Activated CD8-positive, alpha-beta T cell treated with anti-CD3 and anti-CD28 coated beads, Interleukin-2, amount 10 ng/mL, durations not matched to agents 7 days and 5 days (primary cell): ENCODE measurements at regions of chr19 and their contacts with region 1.

Region 1: DNA sequence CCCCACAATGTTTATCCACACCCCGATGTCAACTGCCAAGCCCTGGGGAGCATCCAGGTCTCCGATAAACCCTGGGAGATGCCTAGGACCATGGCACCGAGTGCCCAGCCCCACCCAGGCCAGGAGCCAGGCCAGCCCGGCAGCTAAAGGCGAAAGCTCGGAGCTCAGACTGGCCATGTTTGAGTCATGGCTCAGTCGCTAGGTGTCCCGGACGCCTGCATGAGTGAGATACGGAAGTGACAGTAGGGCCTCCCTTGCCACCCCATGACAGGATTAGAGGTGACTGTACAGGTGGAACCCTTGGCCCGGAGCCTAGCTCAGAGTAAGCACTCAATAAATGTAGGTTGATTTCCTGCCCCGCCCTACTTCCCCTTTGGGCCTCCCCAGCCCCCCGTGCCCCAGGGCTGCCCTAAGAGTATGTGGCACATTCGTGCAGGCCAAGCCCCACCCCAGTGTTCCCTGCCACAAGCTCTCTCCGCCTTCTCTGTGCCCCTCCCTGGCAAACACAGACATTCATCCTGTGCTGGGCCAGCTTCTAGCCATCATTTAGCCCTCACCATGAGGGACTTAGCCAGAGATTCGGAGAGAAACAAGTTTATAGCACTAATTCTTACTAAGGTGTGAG is 5.8 kb upstream of the TPM4 start:
- DNase-seq: peak; percentile 92
- ATAC-seq: peak; percentile 95
- H3K4me3 Mint-ChIP-seq: no peak overlapping the region
- H3K27ac Mint-ChIP-seq: no peak overlapping the region
- H3K4me1 Mint-ChIP-seq: peaks cover 51% of the 10 kb centered on the region
- H3K27me3 Mint-ChIP-seq: no peaks in the 10 kb centered on the region

Region 2: DNA sequence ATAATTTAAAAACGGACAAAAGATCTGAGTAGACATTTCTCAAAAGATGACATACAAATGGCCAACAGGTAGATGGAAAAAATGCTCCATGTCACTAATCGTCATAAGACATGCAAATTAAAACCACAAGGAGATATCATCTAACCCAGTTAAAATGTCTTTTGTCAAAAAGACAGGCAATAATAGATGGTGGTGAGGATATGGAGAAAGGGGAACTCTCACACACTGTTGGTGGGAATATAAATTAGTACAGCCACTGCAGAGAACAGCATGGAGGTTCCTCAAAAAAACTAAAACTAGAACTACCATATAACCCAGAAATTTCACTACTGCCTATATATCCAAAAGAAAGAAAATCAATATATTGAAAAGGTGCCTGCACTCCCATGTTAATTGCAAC is 83.8 kb before region 1 on chr19:
- CTCF ChIA-PET with region 1: no interaction called
- POLR2A ChIA-PET with region 1: no interaction called
- DNase-seq: no peak
- ATAC-seq: no peak
- H3K4me3 Mint-ChIP-seq: no peak overlapping the region
- H3K27ac Mint-ChIP-seq: no peak overlapping the region
- H3K4me1 Mint-ChIP-seq: peaks cover 15% of the 10 kb centered on the region
- H3K27me3 Mint-ChIP-seq: peaks cover 27% of the 10 kb centered on the region

Region 3: GRCh38 chr19:16025108-16026101 is 45.1 kb before region 1 on chr19:
- CTCF ChIA-PET with region 1: no interaction called
- POLR2A ChIA-PET with region 1: no interaction called
- DNase-seq: peak; percentile 29
- ATAC-seq: no peak
- H3K4me3 Mint-ChIP-seq: no peak overlapping the region
- H3K27ac Mint-ChIP-seq: no peak overlapping the region
- H3K4me1 Mint-ChIP-seq: no peaks in the 10 kb centered on the region
- H3K27me3 Mint-ChIP-seq: no peaks in the 10 kb centered on the region

Region 4: DNA sequence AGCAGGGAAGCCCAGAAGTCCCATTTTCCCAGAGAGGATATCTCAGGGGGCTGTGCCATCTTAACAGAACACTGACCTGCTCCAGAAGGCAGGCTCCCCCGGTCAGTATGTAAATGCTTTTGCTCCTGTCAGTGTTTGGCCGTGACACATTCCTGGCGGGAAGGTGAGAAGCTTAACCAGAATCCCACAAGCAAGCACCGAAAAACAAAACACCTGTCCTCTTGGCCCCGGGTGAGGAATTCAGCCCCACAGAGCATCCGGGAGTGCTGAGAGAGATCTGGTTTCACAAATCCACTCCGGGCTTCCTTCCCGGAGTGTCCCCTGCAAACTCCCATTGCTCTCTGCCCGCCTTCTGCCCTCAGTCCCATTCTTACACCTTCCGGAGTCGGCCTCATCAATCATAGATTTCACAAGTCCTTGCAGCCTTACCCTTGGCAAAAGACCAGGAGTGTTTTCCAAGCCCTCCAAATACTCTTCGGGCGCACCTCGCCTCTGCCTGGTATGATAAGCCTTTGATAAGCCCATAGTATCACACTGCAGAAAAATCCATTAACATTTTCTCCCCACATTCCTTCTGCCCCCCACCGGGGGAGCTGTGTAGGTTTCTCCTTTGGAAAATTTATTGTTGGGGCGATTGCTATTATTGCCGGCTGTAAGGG is 18.0 kb after region 1 on chr19:
- CTCF ChIA-PET with region 1: interaction called, 11 read pairs
- POLR2A ChIA-PET with region 1: interaction called, 33 read pairs
- DNase-seq: no peak
- ATAC-seq: no peak
- H3K4me3 Mint-ChIP-seq: no peak overlapping the region
- H3K27ac Mint-ChIP-seq: peak overlapping the region; percentile 37
- H3K4me1 Mint-ChIP-seq: peaks cover 66% of the 10 kb centered on the region
- H3K27me3 Mint-ChIP-seq: no peaks in the 10 kb centered on the region